MCF 10A (cell line): ENCODE measurements at regions of chr11 and their contacts with region 1.

Region 1: GRCh38 chr11:34051349-34052035 is at the start of gene CAPRIN1:
- DNase-seq: peak; percentile 86
- H3K4me3 Mint-ChIP-seq: peak within 1 kb of the TSS; percentile 99
- H3K27ac Mint-ChIP-seq: peak within 1 kb of the TSS; percentile 96
- H3K4me1 Mint-ChIP-seq: peaks cover 17% of the 10 kb centered on the region
- H3K27me3 Mint-ChIP-seq: no peaks in the 10 kb centered on the region
- CTCF ChIP-seq: no peak
- total RNA-seq, gene CAPRIN1: 190 and 219 TPM in 2 replicates

Region 2: DNA sequence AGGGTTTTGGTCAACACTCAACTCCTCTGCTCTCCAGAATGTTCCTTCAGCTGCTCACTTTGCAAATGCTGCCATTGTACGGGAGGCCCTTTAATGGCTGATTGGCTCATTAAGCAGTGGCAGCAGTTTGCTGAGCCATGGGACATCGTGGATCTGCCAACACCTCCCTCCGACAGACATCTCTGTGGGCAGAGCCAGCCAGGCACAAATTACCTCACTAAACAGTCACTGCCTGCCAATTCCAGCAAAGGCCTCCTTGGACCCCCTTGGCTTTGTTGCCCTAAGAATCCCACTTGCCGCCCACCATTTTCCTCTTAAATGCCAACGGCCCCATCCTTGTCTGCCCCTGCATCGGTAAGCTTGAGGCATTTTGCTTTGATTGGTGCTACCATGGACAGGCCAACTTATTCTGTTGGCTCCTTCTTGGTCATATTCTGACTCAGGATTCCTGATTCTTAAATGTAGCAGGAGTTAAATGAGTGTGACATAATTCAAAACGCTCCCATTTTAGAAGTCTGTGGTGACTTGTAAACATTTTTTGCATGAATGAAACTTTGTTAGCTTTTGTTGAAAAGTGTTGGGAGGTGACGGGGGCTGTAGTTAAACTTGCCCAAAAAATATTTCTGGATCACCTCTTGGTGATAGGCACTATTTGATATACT is 102.1 kb before region 1 on chr11:
- CTCF ChIA-PET with region 1: no interaction called
- POLR2A ChIA-PET with region 1: no interaction called
- intact Hi-C with region 1: no loop called
- DNase-seq: no peak
- H3K4me3 Mint-ChIP-seq: no peak overlapping the region
- H3K27ac Mint-ChIP-seq: no peak overlapping the region
- H3K4me1 Mint-ChIP-seq: no peaks in the 10 kb centered on the region
- H3K27me3 Mint-ChIP-seq: no peaks in the 10 kb centered on the region
- CTCF ChIP-seq: no peak

Region 3: DNA sequence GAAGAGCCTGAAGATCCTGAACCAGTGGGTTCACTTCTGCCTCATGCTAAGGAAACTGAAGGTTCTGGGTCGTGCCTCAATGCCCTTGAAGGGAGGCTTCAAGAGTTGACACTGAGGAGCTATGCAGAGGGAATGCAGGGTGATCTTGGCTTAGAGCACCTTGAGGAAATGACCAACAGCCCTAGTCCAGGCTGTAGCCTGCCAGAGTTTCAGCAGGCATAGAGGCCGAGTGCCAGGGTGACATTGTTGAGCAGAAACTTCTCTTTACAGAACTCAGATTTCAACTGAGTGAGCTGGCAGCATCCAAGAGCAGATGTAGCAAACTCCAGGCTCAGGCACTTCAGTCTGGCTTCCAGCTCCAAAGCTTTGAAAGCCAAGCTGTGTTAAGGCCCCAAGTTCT is 23.1 kb before region 1 on chr11:
- CTCF ChIA-PET with region 1: interaction called, 4 read pairs
- POLR2A ChIA-PET with region 1: interaction called, 74 read pairs
- intact Hi-C with region 1: no loop called
- DNase-seq: no peak
- H3K4me3 Mint-ChIP-seq: no peak overlapping the region
- H3K27ac Mint-ChIP-seq: no peak overlapping the region
- H3K4me1 Mint-ChIP-seq: peaks cover 11% of the 10 kb centered on the region
- H3K27me3 Mint-ChIP-seq: no peaks in the 10 kb centered on the region
- CTCF ChIP-seq: no peak

Region 4: DNA sequence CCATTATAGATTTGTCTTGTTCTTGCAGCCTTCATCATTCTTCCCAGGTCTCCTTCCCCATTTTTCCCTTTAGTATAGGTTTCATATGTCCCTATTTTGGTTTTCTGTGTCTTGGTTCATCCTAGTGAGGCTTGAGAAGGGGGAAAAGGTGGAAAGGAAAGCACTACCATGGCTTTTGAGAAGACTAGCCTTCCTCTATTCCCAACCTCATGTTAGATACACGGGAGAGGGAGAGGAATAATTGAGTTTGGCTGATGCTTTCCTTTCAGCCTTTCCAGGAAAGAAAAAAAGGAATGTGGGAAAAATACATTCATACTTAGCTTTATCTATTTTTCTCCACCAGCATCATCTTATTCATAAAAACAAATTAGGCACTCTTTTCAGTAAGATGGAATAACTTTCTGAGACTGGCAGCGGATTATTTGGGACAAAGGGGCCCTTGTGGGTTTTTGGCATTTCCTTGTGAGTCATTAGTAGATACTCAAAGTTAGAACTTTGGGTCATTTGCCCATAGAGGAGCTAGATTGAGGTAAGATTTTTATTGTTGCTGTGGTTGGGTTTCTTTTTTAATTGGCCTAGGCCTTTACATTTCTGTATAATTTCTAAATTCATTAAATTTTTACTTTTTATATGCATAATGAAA is 23.8 kb after region 1 on chr11:
- CTCF ChIA-PET with region 1: no interaction called
- POLR2A ChIA-PET with region 1: interaction called, 14 read pairs
- intact Hi-C with region 1: no loop called
- DNase-seq: peak; percentile 63
- H3K4me3 Mint-ChIP-seq: no peak overlapping the region
- H3K27ac Mint-ChIP-seq: peak overlapping the region; percentile 69
- H3K4me1 Mint-ChIP-seq: peaks cover 20% of the 10 kb centered on the region
- H3K27me3 Mint-ChIP-seq: no peaks in the 10 kb centered on the region
- CTCF ChIP-seq: no peak

Region 5: GRCh38 chr11:34357701-34358257 is 306.3 kb after region 1 on chr11 and contains the start of gene ABTB2:
- CTCF ChIA-PET with region 1: no interaction called
- POLR2A ChIA-PET with region 1: no interaction called
- intact Hi-C with region 1: no loop called
- DNase-seq: peak; percentile 95
- H3K4me3 Mint-ChIP-seq: peak within 1 kb of the TSS; percentile 74
- H3K27ac Mint-ChIP-seq: no peak within 1 kb of the TSS
- H3K4me1 Mint-ChIP-seq: peaks cover 8% of the 10 kb centered on the region
- H3K27me3 Mint-ChIP-seq: no peaks in the 10 kb centered on the region
- CTCF ChIP-seq: no peak
- total RNA-seq, gene ABTB2: 2.9 and 3.1 TPM in 2 replicates